Right ventricle myocardium inferior (tissue), 1 donor: ENCODE measurements at regions of chr1 and their contacts with region 1.

Region 1: DNA sequence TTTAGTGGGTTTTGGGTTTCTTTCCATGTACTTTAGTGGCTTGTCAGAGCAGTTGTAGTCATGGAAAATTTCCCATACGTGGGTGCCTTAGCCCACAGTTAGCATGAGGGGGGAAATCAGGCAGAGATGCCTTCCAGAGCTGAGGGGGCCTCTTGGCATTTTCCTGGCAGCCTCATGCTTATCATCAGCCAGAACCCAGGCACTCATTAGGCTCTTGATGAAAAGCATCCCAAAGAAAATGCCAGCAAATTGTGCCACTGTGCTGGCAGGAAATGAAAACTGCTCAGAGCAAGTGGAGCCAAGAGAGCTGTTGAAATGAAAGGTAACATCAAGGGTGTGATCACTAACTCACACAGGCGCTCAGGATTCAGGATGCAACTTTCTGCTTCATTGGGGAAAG is 128.0 kb downstream of the TNNI3K start:
- DNase-seq: no peak
- ATAC-seq: peak; percentile 95

Region 2: GRCh38 chr1:74245168-74245772 is 118.0 kb before region 1 on chr1:
- intact Hi-C with region 1: loop called (anchors 10 kb)
- DNase-seq: no peak
- ATAC-seq: peak; percentile 65

Region 3: GRCh38 chr1:74375376-74375775 is 12.2 kb after region 1 on chr1:
- intact Hi-C with region 1: no loop called
- DNase-seq: no peak
- ATAC-seq: no peak